ENCODE measurements at regions of chr11 and their contacts with region 1.

Region 1: DNA sequence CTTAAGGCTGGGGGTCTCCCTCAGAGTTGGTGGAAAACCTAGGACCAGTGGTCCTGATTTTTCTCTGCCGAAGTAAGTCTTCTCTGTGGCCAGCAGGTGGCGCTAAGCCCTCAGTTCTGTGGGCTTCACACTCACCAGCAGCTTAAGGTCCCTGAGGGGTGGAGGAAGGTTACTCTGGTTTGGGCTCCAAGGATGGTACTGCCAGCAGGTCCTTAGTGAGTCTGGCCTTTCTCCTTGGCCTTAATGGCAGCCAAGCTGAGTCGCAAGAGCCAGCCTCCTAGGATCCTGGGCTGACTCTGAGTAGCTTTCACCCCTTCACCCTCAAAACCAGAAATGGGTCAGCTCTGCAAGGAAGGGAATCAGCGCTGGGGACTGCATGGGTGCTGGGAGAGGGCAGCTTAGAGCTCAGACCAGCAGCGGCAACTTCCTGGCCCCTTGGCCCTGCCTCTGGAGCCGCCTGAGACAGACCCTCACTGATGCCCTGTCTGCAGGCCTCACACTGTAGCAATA is 4.4 kb downstream of the KCNJ11 start:
- DNase-seq: peak; percentile 84 to 93 (median 87)
- H3K4me3 ChIP-seq: no peak overlapping the region
- H3K27ac ChIP-seq: no peak overlapping the region
- H3K4me1 ChIP-seq: peaks cover 0 to 4% (median 0%) of the 10 kb centered on the region in 4 experiments
- H3K27me3 ChIP-seq: no peaks in the 10 kb centered on the region

Region 2: GRCh38 chr11:17207317-17208258 is 176.5 kb before region 1 on chr11 and contains the start of gene PIK3C2A:
- CTCF ChIA-PET with region 1: no interaction called
- POLR2A ChIA-PET with region 1: no interaction called
- DNase-seq: peak; percentile 93 to 97 (median 95)
- H3K4me3 ChIP-seq: peak within 1 kb of the TSS; percentile 65 to 93 (median 83)
- H3K27ac ChIP-seq: peak within 1 kb of the TSS; percentile 92 to 96
- H3K4me1 ChIP-seq: peaks cover 16 to 36% (median 29%) of the 10 kb centered on the region in 4 experiments
- H3K27me3 ChIP-seq: no peaks in the 10 kb centered on the region

Region 3: DNA sequence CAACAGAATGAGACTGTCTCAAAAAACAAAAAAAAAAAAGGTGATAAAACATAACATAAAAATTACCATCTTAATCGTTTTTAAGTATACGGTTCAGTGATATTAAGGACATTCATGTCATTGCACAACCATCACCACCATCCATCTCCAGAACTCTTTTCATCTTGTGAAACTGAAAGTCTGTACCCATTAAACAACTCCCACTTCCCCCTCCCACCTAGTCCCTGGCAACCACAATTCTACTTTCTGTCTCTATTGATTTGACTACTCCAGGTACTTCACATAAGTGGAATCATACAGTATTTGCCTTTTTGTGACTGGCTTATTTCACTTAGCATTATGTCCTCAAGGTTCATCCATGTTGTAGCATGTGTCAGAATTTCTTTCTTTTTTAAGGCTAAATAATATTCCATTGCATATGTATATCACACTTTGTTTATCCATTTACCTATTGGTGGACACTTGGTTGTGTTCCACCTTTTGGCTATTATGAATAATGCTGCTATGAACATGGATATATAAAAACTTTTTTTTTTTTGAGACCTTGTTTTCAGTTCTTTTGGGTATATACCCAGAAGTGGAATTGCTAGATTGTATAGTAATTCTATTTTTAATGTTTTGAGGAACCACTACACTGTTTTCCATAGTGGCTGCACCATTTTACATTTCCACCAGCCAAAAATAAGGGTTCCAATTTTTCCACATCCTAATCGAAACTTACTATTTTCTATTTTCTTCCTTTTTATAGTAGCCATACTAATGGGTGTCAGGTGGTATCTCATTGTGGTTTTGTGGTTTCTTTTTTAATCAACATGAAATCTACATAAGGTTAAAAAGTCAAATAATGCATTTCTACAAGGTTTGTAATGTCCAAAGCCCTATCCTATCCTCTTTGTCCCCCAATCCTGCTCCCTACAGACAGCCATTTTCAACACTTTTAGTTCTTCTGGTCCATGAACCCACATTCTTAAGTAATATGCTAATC is 152.9 kb before region 1 on chr11:
- CTCF ChIA-PET with region 1: interaction called, 11 read pairs
- POLR2A ChIA-PET with region 1: no interaction called
- DNase-seq: peak in 2 of 3 donors; percentile 29 to 39
- H3K4me3 ChIP-seq: no peak overlapping the region
- H3K27ac ChIP-seq: no peak overlapping the region
- H3K4me1 ChIP-seq: peaks cover 0 to 6% (median 3%) of the 10 kb centered on the region in 4 experiments
- H3K27me3 ChIP-seq: no peaks in the 10 kb centered on the region

Region 4: GRCh38 chr11:17366495-17366894 is 17.6 kb before region 1 on chr11:
- CTCF ChIA-PET with region 1: interaction called, 10 read pairs
- POLR2A ChIA-PET with region 1: no interaction called
- DNase-seq: no peak
- H3K4me3 ChIP-seq: no peak overlapping the region
- H3K27ac ChIP-seq: no peak overlapping the region
- H3K4me1 ChIP-seq: no peaks in the 10 kb centered on the region
- H3K27me3 ChIP-seq: no peaks in the 10 kb centered on the region

Region 5: GRCh38 chr11:17504330-17505107 is 120.5 kb after region 1 on chr11:
- CTCF ChIA-PET with region 1: interaction called, 220 read pairs
- POLR2A ChIA-PET with region 1: no interaction called
- DNase-seq: peak; percentile 67 to 85 (median 79)
- H3K4me3 ChIP-seq: no peak overlapping the region
- H3K27ac ChIP-seq: no peak overlapping the region
- H3K4me1 ChIP-seq: no peaks in the 10 kb centered on the region
- H3K27me3 ChIP-seq: peaks cover 0 to 3% (median 2%) of the 10 kb centered on the region in 5 experiments

Region 6: DNA sequence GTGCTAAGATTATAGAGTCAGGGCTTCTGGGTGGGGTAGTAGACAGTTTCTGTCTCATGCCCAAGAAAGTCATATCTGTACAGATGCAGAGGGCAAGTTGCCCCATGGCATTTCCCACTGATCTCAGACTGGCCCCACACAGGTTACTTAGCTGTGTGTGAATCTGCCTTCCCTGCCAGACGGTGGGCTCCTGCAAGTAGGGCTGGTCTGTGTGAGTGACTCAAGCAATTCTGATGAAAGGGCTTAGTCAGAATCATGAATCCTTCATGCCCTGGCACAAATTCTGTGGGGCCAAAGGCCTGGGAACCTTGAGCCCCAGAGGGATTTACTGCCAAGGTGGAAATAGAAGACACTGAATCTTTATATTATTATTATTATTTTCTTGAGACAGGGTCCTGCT is 129.8 kb after region 1 on chr11:
- CTCF ChIA-PET with region 1: interaction called, 220 read pairs
- POLR2A ChIA-PET with region 1: no interaction called
- DNase-seq: peak in 1 of 3 donors; percentile 5
- H3K4me3 ChIP-seq: no peak overlapping the region
- H3K27ac ChIP-seq: no peak overlapping the region
- H3K4me1 ChIP-seq: no peaks in the 10 kb centered on the region
- H3K27me3 ChIP-seq: peaks cover 0 to 13% (median 3%) of the 10 kb centered on the region in 5 experiments

Region 7: DNA sequence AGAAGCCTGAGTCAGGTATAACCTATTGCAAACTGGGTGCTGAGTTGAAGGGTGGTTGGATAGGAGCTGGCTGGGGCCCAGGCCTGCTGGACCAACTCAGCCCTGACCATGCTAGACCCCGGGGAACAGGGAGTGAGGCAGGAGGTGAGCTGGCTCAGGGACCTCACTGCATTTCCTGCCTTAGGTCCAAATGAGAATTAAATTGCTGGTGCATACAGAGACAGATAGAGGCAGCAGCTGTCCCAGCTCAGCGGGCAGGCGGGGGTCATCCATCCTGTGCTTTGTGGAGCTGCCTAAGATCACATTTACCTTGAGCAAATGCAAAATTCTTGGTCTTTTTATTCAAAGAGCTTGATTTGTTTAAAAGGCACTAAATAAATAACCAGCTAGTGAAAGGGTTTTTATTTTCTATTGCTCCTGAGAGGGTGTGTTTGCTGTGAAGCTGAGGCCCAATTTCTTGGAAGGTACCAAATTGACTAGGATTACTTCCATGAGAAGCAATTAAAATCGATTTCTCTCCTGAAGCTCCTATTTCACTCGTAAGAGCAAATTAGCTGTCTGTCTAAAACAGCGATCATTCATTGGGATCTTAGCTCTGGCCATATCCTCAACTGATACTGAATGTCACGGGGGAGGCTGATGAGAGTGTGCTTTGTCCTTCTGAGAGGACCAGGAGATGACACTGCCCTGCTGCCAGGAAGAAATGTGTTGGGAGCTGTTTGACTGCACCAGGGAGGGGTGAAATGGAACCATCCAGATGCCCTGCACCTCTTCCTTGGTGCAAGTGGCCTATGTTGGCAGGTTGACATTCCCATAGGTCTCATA is 135.2 kb after region 1 on chr11:
- CTCF ChIA-PET with region 1: interaction called, 14 read pairs
- POLR2A ChIA-PET with region 1: no interaction called
- DNase-seq: no peak
- H3K4me3 ChIP-seq: no peak overlapping the region
- H3K27ac ChIP-seq: no peak overlapping the region
- H3K4me1 ChIP-seq: no peaks in the 10 kb centered on the region
- H3K27me3 ChIP-seq: peaks cover 0 to 7% (median 3%) of the 10 kb centered on the region in 5 experiments

Region 8: GRCh38 chr11:17528181-17528691 is 144.2 kb after region 1 on chr11:
- CTCF ChIA-PET with region 1: interaction called, 13 read pairs
- POLR2A ChIA-PET with region 1: no interaction called
- DNase-seq: peak; percentile 30 to 56 (median 52)
- H3K4me3 ChIP-seq: no peak overlapping the region
- H3K27ac ChIP-seq: no peak overlapping the region
- H3K4me1 ChIP-seq: no peaks in the 10 kb centered on the region
- H3K27me3 ChIP-seq: peaks cover 0 to 10% (median 2%) of the 10 kb centered on the region in 5 experiments

Measured in common myeloid progenitor, CD34-positive (primary cell).